Ascending aorta (tissue), 2 donors: ENCODE measurements at regions of chr2 and their contacts with region 1.

Region 1: GRCh38 chr2:83650898-83651297 is 808.2 kb downstream of the SUCLG1 start:
- DNase-seq: no peak
- H3K4me3 ChIP-seq: no peak overlapping the region
- H3K27ac ChIP-seq: no peak overlapping the region
- H3K4me1 ChIP-seq: no peaks in the 10 kb centered on the region
- H3K27me3 ChIP-seq: no peaks in the 10 kb centered on the region
- CTCF ChIP-seq: no peak

Region 2: DNA sequence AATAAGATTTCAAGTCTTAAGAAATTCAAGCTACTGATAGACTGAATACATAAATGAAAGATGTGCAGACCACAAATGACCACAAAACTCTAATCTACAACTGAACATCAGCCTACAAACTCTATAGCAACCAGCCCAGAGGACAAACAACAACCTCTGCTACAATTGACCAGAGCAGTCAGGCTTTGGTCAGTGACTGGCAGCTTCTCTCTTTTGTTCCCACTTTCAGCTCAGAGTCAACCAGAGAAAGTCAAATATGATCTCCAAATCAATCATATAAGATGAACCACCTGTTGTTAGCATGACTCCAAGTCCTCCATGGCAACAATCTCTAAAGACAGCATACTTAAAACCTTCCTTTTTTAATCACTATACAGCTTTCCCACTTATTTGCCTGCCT is 188.0 kb before region 1 on chr2:
- intact Hi-C with region 1: no loop called
- DNase-seq: no peak
- H3K4me3 ChIP-seq: no peak overlapping the region
- H3K27ac ChIP-seq: no peak overlapping the region
- H3K4me1 ChIP-seq: no peaks in the 10 kb centered on the region
- H3K27me3 ChIP-seq: no peaks in the 10 kb centered on the region
- CTCF ChIP-seq: no peak

Region 3: GRCh38 chr2:83661711-83662110 is 10.8 kb after region 1 on chr2:
- intact Hi-C with region 1: loop called (anchors 1 kb)
- DNase-seq: no peak
- H3K4me3 ChIP-seq: no peak overlapping the region
- H3K27ac ChIP-seq: no peak overlapping the region
- H3K4me1 ChIP-seq: no peaks in the 10 kb centered on the region
- H3K27me3 ChIP-seq: no peaks in the 10 kb centered on the region
- CTCF ChIP-seq: no peak

Region 4: DNA sequence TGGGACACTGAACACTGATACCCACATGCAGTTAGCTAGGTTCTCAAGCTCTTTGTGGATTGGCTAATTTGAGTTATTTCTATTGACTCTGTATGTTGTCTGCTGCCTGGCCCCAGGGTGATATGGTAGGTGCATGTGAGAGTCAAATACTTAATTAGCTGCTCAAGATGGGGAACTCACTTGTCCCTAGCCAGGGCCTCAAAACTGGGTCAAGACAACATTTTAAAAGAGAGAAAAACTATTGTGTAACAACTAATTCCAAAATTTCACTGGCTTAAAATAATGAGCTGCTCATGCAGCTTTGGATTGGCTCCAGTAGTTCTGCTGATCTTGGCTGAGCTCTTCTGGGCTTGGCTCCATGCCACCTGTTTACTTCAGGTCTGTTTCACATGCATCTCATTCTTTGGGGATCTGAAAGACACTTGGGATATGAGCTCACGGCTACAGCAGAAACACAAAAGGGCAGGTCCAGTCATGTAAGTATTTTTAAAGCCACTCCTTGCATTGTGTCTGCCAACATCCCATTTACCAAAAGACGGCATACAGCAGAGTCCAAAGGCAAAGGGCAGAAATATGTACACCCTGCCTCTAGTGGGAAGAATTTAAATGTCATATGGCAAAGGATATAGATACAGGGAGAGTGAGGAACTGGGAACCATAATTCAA is 91.4 kb after region 1 on chr2:
- intact Hi-C with region 1: no loop called
- DNase-seq: no peak
- H3K4me3 ChIP-seq: no peak overlapping the region
- H3K27ac ChIP-seq: no peak overlapping the region
- H3K4me1 ChIP-seq: no peaks in the 10 kb centered on the region
- H3K27me3 ChIP-seq: no peaks in the 10 kb centered on the region
- CTCF ChIP-seq: no peak